Heart left ventricle (tissue), 16 donors: ENCODE measurements at regions of chr6 and their contacts with region 1.

Region 1: GRCh38 chr6:1679031-1679686 is 69.4 kb downstream of the FOXC1 start:
- DNase-seq: peak in 4 of 5 donors; percentile 19 to 45 (median 37)
- ATAC-seq: peak; percentile 88 to 97 (median 95)
- H3K4me3 ChIP-seq: no peak overlapping the region
- H3K27ac ChIP-seq: peak overlapping the region in 9 of 12 donors; percentile 24 to 73 (median 41)
- H3K4me1 ChIP-seq: peaks cover 0 to 28% (median 15%) of the 10 kb centered on the region in 12 donors
- H3K27me3 ChIP-seq: no peaks in the 10 kb centered on the region
- CTCF ChIP-seq: no peak
- POLR2A ChIP-seq: no peak

Region 2: GRCh38 chr6:1208876-1209275 is 470.3 kb before region 1 on chr6:
- intact Hi-C with region 1: no loop called
- DNase-seq: no peak
- ATAC-seq: no peak
- H3K4me3 ChIP-seq: no peak overlapping the region
- H3K27ac ChIP-seq: no peak overlapping the region
- H3K4me1 ChIP-seq: no peaks in the 10 kb centered on the region
- H3K27me3 ChIP-seq: peaks cover 0 to 14% (median 5%) of the 10 kb centered on the region in 9 donors
- CTCF ChIP-seq: no peak
- POLR2A ChIP-seq: no peak

Region 3: DNA sequence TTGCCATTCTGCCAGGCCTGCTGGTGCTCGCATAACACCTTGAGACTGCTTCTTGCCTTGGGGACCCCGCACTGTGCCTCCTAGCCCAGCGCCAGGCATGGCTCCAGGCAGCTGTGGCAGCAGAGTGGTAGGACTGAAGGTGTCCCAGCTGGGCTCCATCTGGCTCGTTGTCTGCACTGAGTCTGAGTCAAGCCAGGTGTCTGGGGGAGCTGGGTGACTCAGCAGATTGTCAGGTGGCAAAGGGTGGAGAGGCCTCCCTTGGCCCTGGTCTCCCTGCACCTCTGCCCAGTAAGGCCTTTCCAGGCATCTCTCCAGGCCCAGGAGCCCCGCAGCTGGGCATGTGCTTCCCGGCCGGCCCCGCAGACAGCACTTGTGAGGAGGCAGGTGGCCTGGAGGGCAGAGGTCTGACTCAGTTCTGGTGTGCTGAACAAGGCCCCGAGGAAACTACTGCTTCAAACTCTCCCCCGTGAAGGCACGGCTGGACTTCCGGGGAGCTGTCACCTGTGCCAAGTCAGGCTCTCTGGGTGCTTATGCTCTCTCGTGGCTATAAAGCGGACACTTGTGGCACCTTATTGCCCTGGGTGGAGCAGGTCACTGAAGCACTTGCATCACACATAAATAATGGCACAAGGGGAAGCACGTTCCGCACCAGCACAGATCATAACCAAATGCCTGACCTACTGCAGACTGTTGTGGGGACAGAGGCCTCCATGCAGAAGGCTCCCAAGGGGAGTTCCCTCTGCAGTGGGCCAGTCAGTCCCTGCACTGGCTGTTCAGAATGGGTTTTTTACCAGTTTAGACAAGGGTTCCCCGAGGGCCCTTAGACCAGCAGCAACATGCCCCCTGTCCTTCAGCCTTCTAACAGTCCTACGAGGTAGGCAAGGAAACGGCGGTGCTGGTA is 41.9 kb before region 1 on chr6:
- intact Hi-C with region 1: loop called in 1 of 10 experiments (anchors 5 kb)
- DNase-seq: no peak
- ATAC-seq: peak in 1 of 4 donors; percentile 6
- H3K4me3 ChIP-seq: no peak overlapping the region
- H3K27ac ChIP-seq: no peak overlapping the region
- H3K4me1 ChIP-seq: peaks cover 0 to 29% (median 10%) of the 10 kb centered on the region in 12 donors
- H3K27me3 ChIP-seq: no peaks in the 10 kb centered on the region
- CTCF ChIP-seq: no peak
- POLR2A ChIP-seq: no peak

Region 4: DNA sequence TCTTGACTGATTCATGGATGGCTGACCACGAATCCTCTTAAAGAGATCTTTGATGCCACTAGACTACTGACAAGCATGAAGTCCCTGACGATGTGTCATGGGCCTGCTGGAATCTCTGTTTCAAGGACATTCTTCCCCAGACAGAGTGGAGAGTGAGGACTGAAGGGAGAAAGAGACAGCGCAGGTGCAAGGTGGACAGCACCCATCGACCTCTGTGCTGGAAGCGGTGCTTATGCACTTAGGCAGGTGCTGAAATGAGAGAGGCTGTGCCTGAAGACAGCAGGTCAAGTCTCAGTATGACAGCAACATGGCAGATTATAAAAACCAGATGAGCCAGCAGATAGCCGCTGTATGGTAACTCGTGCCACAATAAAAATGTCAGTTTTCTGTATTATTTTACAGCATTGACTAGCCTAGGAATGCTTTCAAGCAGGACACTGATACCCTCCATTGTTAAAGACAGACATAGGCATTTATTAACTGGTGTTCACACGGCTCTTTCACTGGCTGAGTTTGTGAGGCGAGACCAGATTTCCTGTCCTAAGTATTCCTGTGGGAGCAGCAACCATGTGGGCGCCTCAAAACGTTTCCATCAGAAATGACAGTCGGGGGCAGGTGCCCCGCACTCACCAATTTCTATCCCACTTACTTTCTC is 21.9 kb before region 1 on chr6:
- intact Hi-C with region 1: no loop called
- DNase-seq: no peak
- ATAC-seq: no peak
- H3K4me3 ChIP-seq: no peak overlapping the region
- H3K27ac ChIP-seq: no peak overlapping the region
- H3K4me1 ChIP-seq: no peaks in the 10 kb centered on the region
- H3K27me3 ChIP-seq: no peaks in the 10 kb centered on the region
- CTCF ChIP-seq: no peak
- POLR2A ChIP-seq: no peak